BJ (cell line): ENCODE measurements at regions of chr4 and their contacts with region 1.

Region 1: DNA sequence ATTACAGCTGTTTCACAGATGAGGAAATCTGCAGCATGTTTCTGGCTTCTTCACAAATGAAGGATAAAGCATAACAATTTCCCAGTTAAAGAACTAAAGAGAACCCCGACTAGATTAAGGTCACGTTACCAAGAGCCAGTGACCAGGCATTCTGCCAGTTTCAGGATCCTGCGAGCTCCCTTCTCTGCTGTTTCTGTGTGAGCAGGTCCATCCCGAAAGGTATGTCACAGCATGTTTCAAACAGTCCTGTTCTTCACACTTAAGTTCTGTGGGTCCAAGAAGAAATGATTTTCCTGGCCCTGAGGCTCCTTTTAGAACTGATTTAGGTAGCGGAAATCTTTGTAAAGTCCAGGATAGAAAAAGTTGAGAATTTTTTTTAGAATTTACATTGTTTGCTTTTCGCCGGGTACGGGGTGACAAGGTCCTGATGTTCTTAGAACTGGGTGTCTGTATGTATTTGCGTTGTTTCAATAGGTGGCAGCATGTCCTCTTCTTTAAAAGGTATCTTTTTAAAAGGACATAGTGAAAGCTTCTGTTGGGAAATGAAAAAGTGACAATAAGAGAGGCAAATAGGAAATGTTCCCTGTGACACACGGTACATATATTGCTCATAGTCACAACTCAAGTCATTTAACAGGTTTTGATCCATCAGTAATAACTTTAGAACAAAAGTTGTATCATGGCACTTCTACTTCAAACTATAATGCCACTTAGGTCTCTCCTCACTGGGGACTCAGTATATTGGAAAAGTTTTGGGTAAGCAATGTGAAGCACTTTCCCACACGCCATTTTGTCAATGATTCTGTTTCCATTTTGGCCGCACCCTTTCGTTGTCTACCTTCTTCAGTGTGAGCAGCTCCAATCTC is 18.4 kb downstream of the IL21 start:
- DNase-seq: no peak
- H3K4me3 ChIP-seq: no peak overlapping the region
- H3K27me3 ChIP-seq: no peaks in the 10 kb centered on the region
- CTCF ChIP-seq: peak; percentile 50

Region 2: DNA sequence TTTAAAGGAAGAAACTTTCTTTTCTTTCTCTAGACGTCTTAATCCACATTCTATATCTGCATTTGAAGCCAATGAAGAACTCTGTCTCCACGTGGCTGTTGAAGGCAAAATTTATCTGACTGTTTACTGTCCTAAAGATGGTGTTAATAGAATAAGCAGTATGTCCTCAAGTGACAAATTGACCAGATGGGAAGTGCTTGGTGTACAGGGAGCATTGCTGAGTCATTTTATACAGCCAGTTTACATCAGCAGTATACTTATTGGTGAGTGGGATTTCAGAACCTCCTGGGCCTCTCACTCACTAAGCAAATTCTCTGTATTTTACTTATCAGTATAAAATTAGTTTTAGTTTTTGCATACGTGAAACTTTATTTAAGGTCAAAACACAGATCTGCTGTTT is 190.0 kb before region 1 on chr4:
- CTCF ChIA-PET with region 1: no interaction called
- POLR2A ChIA-PET with region 1: no interaction called
- DNase-seq: peak; percentile 1
- H3K4me3 ChIP-seq: no peak overlapping the region
- H3K27me3 ChIP-seq: no peaks in the 10 kb centered on the region
- CTCF ChIP-seq: no peak

Region 3: DNA sequence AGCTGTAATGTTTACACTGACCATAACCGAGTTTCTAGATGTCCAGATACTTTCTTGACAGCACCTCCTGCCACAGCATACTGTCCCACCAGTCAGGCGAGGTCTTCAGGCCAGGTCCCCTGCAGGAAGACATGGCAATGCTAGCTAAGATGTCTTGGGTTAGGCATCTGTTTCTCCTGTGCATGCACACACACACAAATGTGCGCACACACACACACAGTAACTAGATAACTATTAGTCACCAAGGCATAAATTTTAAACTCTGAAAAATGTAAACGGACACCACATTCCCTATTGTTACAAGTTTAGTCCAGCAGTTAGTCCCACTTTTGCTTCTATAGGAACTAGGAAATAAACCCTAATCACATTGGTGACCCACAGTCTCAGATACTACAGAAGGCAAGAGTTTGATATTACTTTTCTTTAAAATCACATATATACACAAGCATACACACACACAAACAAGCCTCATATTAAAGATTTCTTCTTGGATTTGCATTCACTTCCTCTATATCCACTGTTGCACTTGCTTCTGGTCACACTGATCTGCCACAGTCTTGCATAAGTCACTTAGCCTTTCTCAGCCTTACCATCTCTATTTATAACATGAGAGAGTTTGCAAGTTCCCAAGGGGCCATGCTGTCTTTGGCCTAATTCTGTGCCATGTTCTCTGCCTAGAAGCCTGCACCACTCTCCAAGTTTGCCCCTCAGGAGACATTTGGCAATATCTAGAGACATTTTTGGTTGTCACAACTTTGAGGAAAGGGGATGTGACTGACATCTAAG is 13.9 kb before region 1 on chr4:
- CTCF ChIA-PET with region 1: interaction called, 20 read pairs
- POLR2A ChIA-PET with region 1: no interaction called
- DNase-seq: no peak
- H3K4me3 ChIP-seq: no peak overlapping the region
- H3K27me3 ChIP-seq: no peaks in the 10 kb centered on the region
- CTCF ChIP-seq: no peak

Region 4: DNA sequence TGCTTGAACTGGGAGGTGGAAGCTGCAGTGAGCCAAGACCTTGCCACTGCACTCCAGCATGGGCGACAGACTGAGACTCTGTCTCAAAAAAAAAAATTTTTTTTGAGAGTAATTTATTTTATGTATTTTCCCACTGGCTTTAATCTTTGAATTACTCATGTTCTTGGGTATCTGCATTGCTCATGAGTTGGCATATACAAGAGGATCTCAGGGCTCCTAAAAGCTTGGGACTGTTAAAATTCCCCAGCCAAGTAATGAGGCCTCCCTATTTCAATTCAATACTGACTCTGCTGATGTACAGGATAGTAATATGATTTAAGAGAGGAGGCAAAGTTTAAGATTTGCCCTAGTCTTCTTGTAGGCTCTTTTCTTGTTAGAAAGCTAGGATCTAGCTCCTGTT is 12.1 kb after region 1 on chr4:
- CTCF ChIA-PET with region 1: interaction called, 11 read pairs
- POLR2A ChIA-PET with region 1: no interaction called
- DNase-seq: no peak
- H3K4me3 ChIP-seq: no peak overlapping the region
- H3K27me3 ChIP-seq: no peaks in the 10 kb centered on the region; the same call in 1 of the 2 replicates
- CTCF ChIP-seq: no peak

Region 5: DNA sequence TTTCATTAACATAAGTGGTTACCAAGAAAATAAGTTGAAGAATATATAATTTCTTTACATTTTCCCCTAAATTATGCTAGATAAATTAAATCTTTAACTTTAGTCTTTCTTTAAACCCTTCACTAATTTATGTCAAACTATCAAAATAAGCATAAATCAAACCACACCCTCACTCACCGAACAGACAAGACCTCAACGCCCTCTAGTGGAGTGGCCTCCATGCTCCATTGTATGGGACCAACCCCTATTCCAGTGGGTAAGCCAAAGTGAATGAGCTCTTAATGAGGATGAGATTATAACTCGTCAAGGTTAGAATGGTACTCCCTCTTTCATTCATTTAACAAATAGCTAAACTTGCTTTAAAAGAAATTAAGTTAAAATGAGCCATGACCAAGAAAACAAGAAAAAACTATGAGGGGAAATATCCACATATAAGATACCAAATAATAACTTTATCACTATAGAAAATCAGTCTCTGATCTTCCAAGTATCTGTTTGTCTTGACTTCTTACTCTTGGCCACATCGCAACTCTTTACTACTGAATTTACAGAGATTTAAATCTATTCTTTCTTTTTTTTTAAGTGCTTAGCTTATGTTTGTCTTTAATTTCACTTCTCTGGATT is 114.4 kb after region 1 on chr4:
- CTCF ChIA-PET with region 1: interaction called, 30 read pairs
- POLR2A ChIA-PET with region 1: no interaction called
- DNase-seq: no peak
- H3K4me3 ChIP-seq: no peak overlapping the region
- H3K27me3 ChIP-seq: no peaks in the 10 kb centered on the region
- CTCF ChIP-seq: peak; percentile 91

Region 6: DNA sequence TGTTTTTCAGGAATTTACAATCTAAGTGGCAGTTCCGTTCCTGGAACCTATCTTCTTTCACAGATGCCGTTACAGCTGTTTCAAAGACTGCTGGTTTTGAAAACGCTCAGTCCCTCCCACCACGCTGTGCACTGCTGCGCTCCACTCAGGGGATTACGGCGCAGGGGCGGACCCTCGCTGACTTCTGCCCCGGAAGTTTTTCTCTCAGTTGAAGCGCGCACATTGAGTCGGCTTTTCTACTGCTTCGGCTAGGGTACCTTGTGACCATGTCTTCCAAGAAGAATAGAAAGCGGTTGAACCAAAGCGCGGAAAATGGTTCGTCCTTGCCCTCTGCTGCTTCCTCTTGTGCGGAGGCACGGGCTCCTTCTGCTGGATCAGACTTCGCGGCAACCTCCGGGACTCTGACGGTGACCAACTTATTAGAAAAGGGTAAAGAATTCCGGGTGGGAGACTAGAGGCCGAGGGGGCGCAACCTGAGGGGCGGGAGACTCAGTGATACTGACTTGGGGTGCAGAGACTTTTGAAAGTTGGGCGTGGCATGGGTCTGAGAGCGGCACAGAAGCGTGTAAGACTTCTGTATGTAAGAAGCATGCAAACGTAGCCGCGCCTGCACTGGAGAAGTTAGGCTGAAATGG is 320.5 kb after region 1 on chr4:
- CTCF ChIA-PET with region 1: interaction called, 12 read pairs
- POLR2A ChIA-PET with region 1: no interaction called
- DNase-seq: no peak
- H3K4me3 ChIP-seq: peak overlapping the region; percentile 76
- H3K27me3 ChIP-seq: no peaks in the 10 kb centered on the region
- CTCF ChIP-seq: 0 out of 2 replicates have a peak, but pooled peaks have one; percentile 2

Region 7: GRCh38 chr4:122930862-122931261 is 328.4 kb after region 1 on chr4:
- CTCF ChIA-PET with region 1: interaction called, 27 read pairs
- POLR2A ChIA-PET with region 1: no interaction called
- DNase-seq: no peak
- H3K4me3 ChIP-seq: no peak overlapping the region
- H3K27me3 ChIP-seq: no peaks in the 10 kb centered on the region
- CTCF ChIP-seq: no peak